ENCODE measurements at regions of chr11 and their contacts with region 1.

Region 1: GRCh38 chr11:66800720-66801428 is 42.4 kb upstream of the RCE1 start:
- ATAC-seq: no peak
- H3K4me3 ChIP-seq: no peak overlapping the region
- H3K27ac ChIP-seq: no peak overlapping the region
- H3K4me1 ChIP-seq: no peaks in the 10 kb centered on the region

Region 2: GRCh38 chr11:66720223-66720947 is 80.5 kb before region 1 on chr11:
- in situ Hi-C with region 1: loop called in 1 of 9 experiments (anchors 25 kb)
- ATAC-seq: peak in 7 of 8 experiments; percentile 31 to 95 (median 89)
- H3K4me3 ChIP-seq: no peak overlapping the region
- H3K27ac ChIP-seq: no peak overlapping the region
- H3K4me1 ChIP-seq: peaks cover 0 to 8% of the 10 kb centered on the region in 2 donors

Region 3: DNA sequence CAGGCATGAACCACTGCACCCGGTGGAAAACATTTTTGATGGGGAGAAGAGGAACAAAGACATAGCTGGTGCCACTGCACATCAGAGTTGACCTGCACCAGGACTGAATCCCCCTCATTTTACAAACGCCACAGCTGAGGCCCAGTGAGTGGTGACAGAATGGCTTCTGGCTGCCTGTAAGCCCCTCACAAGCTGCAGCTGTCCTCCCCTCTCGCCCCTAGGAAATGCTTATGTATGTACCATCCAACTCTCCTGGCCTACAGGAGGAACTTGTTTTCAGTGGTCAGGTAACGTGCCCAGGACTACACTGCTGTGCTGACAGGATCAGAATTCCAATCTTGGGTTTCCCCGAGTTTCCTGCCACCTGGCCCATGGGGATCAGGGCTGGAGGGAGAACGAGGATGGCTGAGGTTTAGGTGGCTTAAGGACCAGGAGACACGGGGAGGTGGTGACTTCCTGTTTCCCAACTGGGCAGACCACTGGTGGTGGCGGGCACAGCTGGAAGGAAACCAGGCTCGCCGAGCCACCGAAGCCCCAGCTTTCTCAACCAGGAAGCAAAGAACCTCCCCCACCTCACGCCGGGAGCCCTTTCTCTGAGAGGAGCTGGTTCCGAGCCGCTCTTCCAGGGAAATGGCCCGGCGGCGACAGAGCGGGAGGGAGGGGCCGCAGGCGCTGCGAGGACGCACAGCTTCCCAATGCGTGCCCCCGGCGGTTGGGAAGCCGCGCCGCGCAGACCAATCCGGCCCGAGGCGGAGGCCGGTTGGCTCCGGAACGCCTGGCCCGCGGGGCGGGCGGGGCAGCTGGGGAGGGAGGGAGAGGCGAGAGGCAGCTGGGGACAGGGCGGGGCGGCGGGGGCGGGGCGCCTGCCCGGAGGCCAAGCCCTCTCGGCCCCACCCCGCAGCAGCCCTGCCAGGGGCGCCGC is 55.0 kb after region 1 on chr11:
- in situ Hi-C with region 1: no loop called
- ATAC-seq: peak; percentile 69 to 88 (median 84)
- H3K4me3 ChIP-seq: peak overlapping the region; percentile 47 to 54 (median 51)
- H3K27ac ChIP-seq: peak overlapping the region; percentile 72 to 84
- H3K4me1 ChIP-seq: peaks cover 10 to 12% of the 10 kb centered on the region in 2 donors

Measured in motor neuron (in vitro differentiated cells).